ENCODE measurements at regions of chr5 and their contacts with region 1.

Region 1: GRCh38 chr5:178153573-178154343 is at the start of gene NHP2:
- DNase-seq: peak; percentile 100
- total RNA-seq, gene NHP2: 77.2 TPM

Region 2: DNA sequence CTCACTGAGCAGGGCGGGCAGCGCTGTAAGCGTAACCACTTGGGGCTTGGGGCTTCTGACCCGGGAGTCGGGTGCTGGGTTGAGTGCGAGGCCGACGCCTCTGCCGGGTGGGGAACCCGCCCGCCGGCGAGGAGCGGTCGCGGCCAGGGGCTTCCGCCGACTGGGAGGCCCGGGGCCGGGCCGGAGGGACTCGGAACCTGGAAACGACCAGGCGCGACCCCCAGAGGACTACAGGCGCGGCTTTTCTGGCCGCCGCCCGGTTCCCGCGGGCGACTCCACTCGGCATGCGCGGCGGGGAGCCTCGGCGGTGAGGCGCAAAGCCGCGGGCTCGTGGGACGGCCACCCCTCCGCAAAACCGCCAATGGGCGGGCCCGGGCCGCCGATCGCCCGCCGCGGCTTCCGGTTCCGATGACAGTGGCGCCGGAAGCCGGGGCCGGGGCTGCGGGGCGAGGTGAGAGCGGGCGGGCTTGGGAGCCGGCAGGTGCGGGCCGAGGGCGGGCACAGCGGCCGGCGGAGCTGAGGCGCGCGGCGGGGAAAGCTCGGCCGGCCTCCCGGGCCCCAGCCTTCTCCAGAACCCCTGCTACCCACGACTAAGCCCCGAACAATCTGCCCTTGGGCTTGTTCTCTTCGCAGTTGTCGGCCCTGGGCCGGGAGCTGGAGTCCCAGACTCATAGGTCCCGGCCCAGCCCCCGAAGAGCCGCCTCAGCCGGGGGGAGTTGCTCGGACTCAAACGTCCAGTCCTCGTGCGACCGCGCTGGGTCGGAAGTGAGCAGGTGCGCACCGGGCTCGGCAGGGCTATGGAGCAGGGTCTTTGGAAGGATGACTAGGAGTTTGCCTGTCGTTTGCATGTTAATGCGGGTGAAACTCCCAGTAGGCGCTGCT is 22.9 kb before region 1 on chr5 and contains the start of gene RMND5B:
- intact Hi-C with region 1: loop called (anchors 2 kb)
- DNase-seq: peak; percentile 92
- total RNA-seq, gene RMND5B: 38.3 TPM

Region 3: GRCh38 chr5:178204182-178204894 is 50.6 kb after region 1 on chr5 and contains the start of gene HNRNPAB:
- intact Hi-C with region 1: loop called (anchors 2 kb)
- DNase-seq: peak; percentile 97
- total RNA-seq, gene HNRNPAB: 105 TPM

Region 4: GRCh38 chr5:178241231-178241663 is 87.5 kb after region 1 on chr5:
- intact Hi-C with region 1: no loop called
- DNase-seq: peak; percentile 82